Activated T-helper 2 cell treated with anti-CD3 and anti-CD28 coated beads, Interferon-gamma antibody, Interleukin-2, Interleukin-4, amounts not matched to agents 10 μg/mL and 5 μg/mL and 100 μg/mL, durations not matched to agents 14 hours and 24 hours and 36 hours (primary cell): ENCODE measurements at regions of chr3 and their contacts with region 1.

Region 1: GRCh38 chr3:27880969-27881892 is 159.1 kb upstream of the EOMES start:
- DNase-seq: peak; percentile 18
- H3K4me3 Mint-ChIP-seq: peak overlapping the region; percentile 79
- H3K27ac Mint-ChIP-seq: peak overlapping the region; percentile 78
- H3K4me1 Mint-ChIP-seq: peaks cover 53% of the 10 kb centered on the region
- H3K27me3 Mint-ChIP-seq: no peaks in the 10 kb centered on the region

Region 2: GRCh38 chr3:27728195-27729087 is 152.8 kb before region 1 on chr3:
- intact Hi-C with region 1: loop called (anchors 5 kb)
- DNase-seq: no peak
- H3K4me3 Mint-ChIP-seq: peak overlapping the region; percentile 64
- H3K27ac Mint-ChIP-seq: no peak overlapping the region
- H3K4me1 Mint-ChIP-seq: peaks cover 45% of the 10 kb centered on the region
- H3K27me3 Mint-ChIP-seq: peaks cover 87% of the 10 kb centered on the region

Region 3: GRCh38 chr3:27861046-27862036 is 19.9 kb before region 1 on chr3:
- intact Hi-C with region 1: loop called (anchors 2 kb)
- DNase-seq: no peak
- H3K4me3 Mint-ChIP-seq: no peak overlapping the region
- H3K27ac Mint-ChIP-seq: peak overlapping the region; percentile 86
- H3K4me1 Mint-ChIP-seq: peaks cover 35% of the 10 kb centered on the region
- H3K27me3 Mint-ChIP-seq: no peaks in the 10 kb centered on the region

Region 4: GRCh38 chr3:27985369-27986035 is 104.3 kb after region 1 on chr3:
- intact Hi-C with region 1: no loop called
- DNase-seq: no peak
- H3K4me3 Mint-ChIP-seq: no peak overlapping the region
- H3K27ac Mint-ChIP-seq: no peak overlapping the region
- H3K4me1 Mint-ChIP-seq: peaks cover 4% of the 10 kb centered on the region
- H3K27me3 Mint-ChIP-seq: peaks cover 6% of the 10 kb centered on the region

Region 5: GRCh38 chr3:28241221-28242160 is 360.3 kb after region 1 on chr3 and contains the start of gene CMC1:
- intact Hi-C with region 1: loop called (anchors 10 kb)
- DNase-seq: peak; percentile 86
- H3K4me3 Mint-ChIP-seq: peak within 1 kb of the TSS; percentile 89
- H3K27ac Mint-ChIP-seq: peak within 1 kb of the TSS; percentile 93
- H3K4me1 Mint-ChIP-seq: peaks cover 38% of the 10 kb centered on the region
- H3K27me3 Mint-ChIP-seq: no peaks in the 10 kb centered on the region
- total RNA-seq, gene CMC1: 20.6 and 23.5 TPM in 2 replicates